ENCODE measurements at regions of chr12 and their contacts with region 1.

Region 1: DNA sequence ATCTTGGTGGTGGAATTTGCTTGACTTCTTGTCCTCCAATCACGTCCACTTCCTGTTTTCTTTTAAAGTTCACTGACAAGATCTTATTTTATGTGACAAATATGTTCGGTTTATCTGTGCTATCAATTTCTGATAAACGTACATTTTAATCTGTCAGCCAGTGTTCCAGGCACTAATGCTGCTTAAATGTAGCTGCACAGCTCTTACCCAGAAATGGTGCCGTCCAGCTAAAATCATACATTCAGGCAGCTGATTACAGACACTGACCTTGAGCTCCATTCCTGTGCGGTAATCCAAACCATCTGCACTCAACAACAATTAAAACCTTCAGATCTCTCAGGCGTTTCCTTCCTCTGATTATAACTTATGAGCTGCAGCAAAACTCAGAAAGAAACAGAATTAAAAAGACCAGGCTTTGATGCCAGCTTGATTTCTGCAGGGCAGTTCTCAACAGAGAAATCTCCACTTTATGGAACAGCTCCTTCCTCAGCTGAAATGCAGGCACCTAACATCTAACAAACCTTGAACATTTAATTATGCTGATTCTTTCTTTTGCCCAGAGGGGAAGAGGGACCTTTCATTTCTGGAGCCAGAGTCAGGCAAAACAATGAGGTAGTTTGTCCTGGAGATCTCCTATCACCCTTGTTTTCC is 26.4 kb upstream of the RASSF3 start:
- DNase-seq: peak in 3 of 14 experiments; percentile 19 to 34 (median 21)
- ATAC-seq: peak; percentile 26
- H3K4me3 ChIP-seq: peak overlapping the region; percentile 24
- H3K4me3 Mint-ChIP-seq: peak overlapping the region; percentile 80
- H3K27ac ChIP-seq: peak overlapping the region; percentile 7 to 23
- H3K27ac Mint-ChIP-seq: peak overlapping the region; percentile 76
- H3K4me1 ChIP-seq: peaks cover 30% of the 10 kb centered on the region
- H3K4me1 Mint-ChIP-seq: peaks cover 34% of the 10 kb centered on the region
- H3K27me3 ChIP-seq: no peaks in the 10 kb centered on the region
- H3K27me3 Mint-ChIP-seq: no peaks in the 10 kb centered on the region
- CTCF ChIP-seq: no peak

Region 2: DNA sequence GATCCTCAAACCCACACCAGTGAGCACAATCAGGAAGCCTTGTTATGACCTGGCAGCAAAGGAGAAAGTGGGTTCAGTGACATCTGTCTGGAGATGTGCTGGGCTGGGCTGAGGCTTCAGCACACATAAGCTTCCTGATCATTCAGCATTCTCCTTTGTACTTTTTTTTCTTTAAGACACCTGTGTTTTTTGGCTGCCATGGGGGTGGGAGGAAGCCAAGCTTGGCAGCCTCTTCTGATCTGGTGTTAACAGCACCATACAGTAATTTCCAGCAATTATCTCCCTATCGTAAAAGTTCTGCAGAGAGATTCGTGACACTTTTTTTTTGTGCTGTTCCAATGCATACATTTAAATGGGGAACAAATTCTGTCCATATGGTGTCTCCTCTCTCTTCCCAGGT is 12.5 kb before region 1 on chr12:
- CTCF ChIA-PET with region 1: no interaction called
- POLR2A ChIA-PET with region 1: interaction called, 13 read pairs
- intact Hi-C with region 1: no loop called
- DNase-seq: peak in 7 of 14 experiments; percentile 4 to 46 (median 20)
- ATAC-seq: peak; percentile 88
- H3K4me3 ChIP-seq: no peak overlapping the region
- H3K4me3 Mint-ChIP-seq: no peak overlapping the region
- H3K27ac ChIP-seq: no peak overlapping the region
- H3K27ac Mint-ChIP-seq: peak overlapping the region; percentile 45
- H3K4me1 ChIP-seq: peaks cover 31% of the 10 kb centered on the region
- H3K4me1 Mint-ChIP-seq: peaks cover 58% of the 10 kb centered on the region
- H3K27me3 ChIP-seq: no peaks in the 10 kb centered on the region
- H3K27me3 Mint-ChIP-seq: no peaks in the 10 kb centered on the region
- CTCF ChIP-seq: no peak

Region 3: GRCh38 chr12:65546528-65546927 is 962.6 kb after region 1 on chr12:
- CTCF ChIA-PET with region 1: no interaction called
- POLR2A ChIA-PET with region 1: no interaction called
- intact Hi-C with region 1: no loop called
- DNase-seq: no peak
- ATAC-seq: no peak
- H3K4me3 ChIP-seq: no peak overlapping the region
- H3K4me3 Mint-ChIP-seq: no peak overlapping the region
- H3K27ac ChIP-seq: no peak overlapping the region
- H3K27ac Mint-ChIP-seq: no peak overlapping the region
- H3K4me1 ChIP-seq: no peaks in the 10 kb centered on the region
- H3K4me1 Mint-ChIP-seq: no peaks in the 10 kb centered on the region
- H3K27me3 ChIP-seq: no peaks in the 10 kb centered on the region
- H3K27me3 Mint-ChIP-seq: no peaks in the 10 kb centered on the region
- CTCF ChIP-seq: no peak

Measured in CD4-positive, alpha-beta T cell (primary cell).